Tibial artery (tissue), 4 donors: ENCODE measurements at regions of chr14 and their contacts with region 1.

Region 1: DNA sequence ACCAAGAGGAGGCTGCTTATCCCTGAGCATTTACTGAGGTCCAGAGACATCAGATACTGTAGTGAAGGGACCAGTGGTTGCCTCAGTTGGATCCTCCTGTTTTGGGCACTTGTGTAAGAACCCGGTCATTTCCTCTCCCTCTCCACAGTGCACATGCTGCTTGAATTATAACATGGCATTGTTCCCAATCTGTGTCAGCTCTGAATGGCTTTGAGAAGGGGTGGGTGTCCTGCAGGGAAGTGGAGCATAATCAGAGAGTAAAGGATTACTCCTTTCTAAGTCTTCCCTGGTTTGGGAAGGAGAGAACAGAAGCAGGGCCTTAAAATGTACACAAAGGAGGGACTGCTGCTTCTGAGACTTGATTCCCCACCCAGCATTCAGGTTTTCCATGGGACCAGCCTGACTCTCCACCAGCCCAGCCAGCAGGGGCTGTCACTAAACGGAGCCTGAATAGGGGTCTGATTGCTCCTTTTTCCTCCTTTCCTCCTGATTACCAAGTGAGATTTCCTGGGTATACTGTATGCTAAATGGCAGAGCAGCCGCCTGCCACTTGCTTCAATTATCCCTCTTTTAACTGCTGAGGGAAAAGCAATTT is 78.4 kb downstream of the NRXN3 start:
- DNase-seq: no peak
- H3K4me3 ChIP-seq: no peak overlapping the region
- H3K27ac ChIP-seq: no peak overlapping the region
- H3K4me1 ChIP-seq: no peaks in the 10 kb centered on the region
- H3K27me3 ChIP-seq: no peaks in the 10 kb centered on the region
- CTCF ChIP-seq: no peak

Region 2: GRCh38 chr14:77752799-77753521 is 495.6 kb before region 1 on chr14:
- intact Hi-C with region 1: loop called (anchors 10 kb)
- DNase-seq: no peak
- H3K4me3 ChIP-seq: no peak overlapping the region
- H3K27ac ChIP-seq: no peak overlapping the region
- H3K4me1 ChIP-seq: peaks cover 0 to 14% (median 6%) of the 10 kb centered on the region in 4 donors
- H3K27me3 ChIP-seq: no peaks in the 10 kb centered on the region
- CTCF ChIP-seq: no peak

Region 3: DNA sequence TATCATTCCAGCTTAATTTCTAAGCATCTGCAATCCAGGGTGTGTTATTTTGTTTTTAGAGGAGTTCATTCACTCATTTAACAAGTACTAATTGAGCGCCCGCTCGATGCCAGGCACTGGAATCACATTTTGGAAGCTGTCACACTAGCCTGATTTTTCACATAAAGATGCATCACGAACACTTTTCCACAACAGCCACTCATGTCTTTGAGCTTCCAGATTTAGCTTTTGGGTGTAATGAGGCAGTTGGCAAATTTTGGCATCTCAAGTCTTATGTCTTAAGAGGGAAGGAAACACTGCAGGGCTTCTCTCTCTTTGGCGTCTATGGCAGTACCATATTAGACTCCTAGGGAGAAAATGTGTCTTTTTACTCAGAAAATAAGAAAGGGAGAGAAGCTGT is 64.4 kb before region 1 on chr14:
- intact Hi-C with region 1: no loop called
- DNase-seq: no peak
- H3K4me3 ChIP-seq: no peak overlapping the region
- H3K27ac ChIP-seq: no peak overlapping the region
- H3K4me1 ChIP-seq: no peaks in the 10 kb centered on the region
- H3K27me3 ChIP-seq: no peaks in the 10 kb centered on the region
- CTCF ChIP-seq: no peak

Region 4: GRCh38 chr14:78498062-78498595 is 249.5 kb after region 1 on chr14:
- intact Hi-C with region 1: no loop called
- DNase-seq: no peak
- H3K4me3 ChIP-seq: no peak overlapping the region
- H3K27ac ChIP-seq: no peak overlapping the region
- H3K4me1 ChIP-seq: no peaks in the 10 kb centered on the region
- H3K27me3 ChIP-seq: no peaks in the 10 kb centered on the region
- CTCF ChIP-seq: no peak